ENCODE measurements at regions of chr13 and their contacts with region 1.

Region 1: DNA sequence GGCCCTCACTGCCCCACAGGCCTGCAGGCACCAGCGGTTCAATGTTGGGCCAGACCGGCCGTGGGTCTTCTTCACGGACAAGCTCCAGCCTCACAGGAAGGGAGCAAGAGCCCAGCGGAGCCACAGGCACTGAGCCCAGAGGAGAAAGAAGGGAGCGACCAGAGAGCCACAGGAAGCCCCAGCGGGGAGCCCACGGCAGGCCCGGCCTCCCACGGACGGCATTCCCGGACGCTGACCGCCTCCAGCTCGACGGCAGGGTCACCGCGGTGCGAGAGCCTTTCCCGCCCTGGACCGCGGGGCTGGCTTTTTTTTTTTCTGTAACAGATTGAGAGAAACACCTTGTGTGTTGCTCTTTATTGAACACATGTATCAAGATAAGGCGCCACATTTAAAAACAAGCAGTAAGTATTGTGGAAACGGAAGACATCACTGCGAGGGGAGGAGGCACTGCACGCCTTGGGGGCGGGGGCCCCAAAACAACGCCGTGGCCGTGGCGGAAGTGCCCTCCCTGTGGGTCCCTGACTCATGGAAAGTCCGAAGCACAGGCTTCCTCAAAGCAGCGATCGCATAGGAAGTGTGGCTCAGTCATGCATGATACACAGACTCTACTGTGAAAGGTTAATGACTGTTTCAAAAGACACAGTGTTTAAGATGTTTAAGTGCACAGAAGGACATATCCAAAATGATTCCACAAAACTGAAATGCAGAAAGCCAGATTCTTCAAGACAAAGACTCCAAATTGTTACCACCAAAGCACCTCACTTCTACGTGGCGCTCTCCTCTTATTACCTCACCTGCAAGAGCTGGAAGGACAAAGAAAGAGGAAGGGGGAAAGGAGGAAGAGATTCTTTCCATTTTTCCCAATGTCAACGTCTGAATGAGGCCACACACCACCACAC is 3.5 kb downstream of the RASA3 start:
- DNase-seq: peak; percentile 91
- H3K4me3 Mint-ChIP-seq: peak overlapping the region; percentile 92
- H3K27ac Mint-ChIP-seq: peak overlapping the region; percentile 92
- H3K4me1 Mint-ChIP-seq: peaks cover 70% of the 10 kb centered on the region
- H3K27me3 Mint-ChIP-seq: peaks cover 2% of the 10 kb centered on the region

Region 2: GRCh38 chr13:114081761-114082681 is 46.9 kb before region 1 on chr13:
- CTCF ChIA-PET with region 1: no interaction called
- POLR2A ChIA-PET with region 1: no interaction called
- DNase-seq: no peak
- H3K4me3 Mint-ChIP-seq: no peak overlapping the region
- H3K27ac Mint-ChIP-seq: no peak overlapping the region
- H3K4me1 Mint-ChIP-seq: peaks cover 16% of the 10 kb centered on the region
- H3K27me3 Mint-ChIP-seq: no peaks in the 10 kb centered on the region

Region 3: GRCh38 chr13:114097212-114097892 is 31.5 kb before region 1 on chr13:
- CTCF ChIA-PET with region 1: no interaction called
- POLR2A ChIA-PET with region 1: no interaction called
- DNase-seq: no peak
- H3K4me3 Mint-ChIP-seq: no peak overlapping the region
- H3K27ac Mint-ChIP-seq: peak overlapping the region; percentile 42
- H3K4me1 Mint-ChIP-seq: peaks cover 48% of the 10 kb centered on the region
- H3K27me3 Mint-ChIP-seq: no peaks in the 10 kb centered on the region

Region 4: GRCh38 chr13:114110091-114110829 is 18.6 kb before region 1 on chr13:
- CTCF ChIA-PET with region 1: interaction called, 15 read pairs
- POLR2A ChIA-PET with region 1: interaction called, 3 read pairs
- DNase-seq: peak; percentile 89
- H3K4me3 Mint-ChIP-seq: peak overlapping the region; percentile 76
- H3K27ac Mint-ChIP-seq: peak overlapping the region; percentile 97
- H3K4me1 Mint-ChIP-seq: peaks cover 75% of the 10 kb centered on the region
- H3K27me3 Mint-ChIP-seq: no peaks in the 10 kb centered on the region